ENCODE measurements at regions of chr11 and their contacts with region 1.

Region 1: DNA sequence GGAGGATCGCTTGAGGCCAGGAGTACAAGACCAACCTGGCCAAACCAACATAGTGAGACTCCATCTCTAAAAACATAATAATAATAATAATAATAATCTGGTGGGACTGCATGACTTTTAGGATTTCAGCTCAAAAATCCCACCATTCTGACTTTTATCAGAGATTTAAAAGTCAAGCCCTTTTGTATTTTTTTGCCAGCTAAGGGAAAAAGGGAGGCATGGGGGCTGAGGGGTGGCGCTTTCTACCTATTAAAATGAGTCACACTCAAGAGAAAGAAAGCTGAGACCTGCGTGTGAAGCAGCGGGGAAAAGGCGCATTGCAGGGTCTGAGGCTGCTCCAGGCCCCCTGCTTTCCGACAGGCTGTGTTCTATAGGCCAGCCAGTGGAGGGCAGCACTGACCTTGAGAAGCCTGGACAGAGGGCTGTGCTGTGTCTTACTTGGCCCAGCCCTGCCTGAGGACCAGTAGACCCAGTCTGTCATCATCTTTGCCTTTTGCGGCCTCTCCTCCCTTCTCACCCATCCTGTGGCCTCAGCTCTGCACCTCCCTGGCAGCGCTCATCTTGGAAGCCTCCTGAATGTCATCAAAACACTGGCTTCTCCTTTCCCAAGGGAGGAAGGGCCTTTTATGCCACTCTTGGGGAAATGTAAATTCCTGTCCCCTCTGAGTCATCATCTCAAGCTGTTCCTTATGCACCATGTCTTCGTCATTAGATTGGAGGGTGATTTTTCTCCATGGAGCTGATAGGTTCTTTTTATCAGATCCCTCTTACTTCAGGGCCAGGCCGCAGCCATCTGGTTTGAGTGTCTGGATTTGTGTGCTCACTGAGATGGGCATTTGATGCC is 12.7 kb upstream of the MAPK8IP1 start:
- DNase-seq: peak; percentile 54 to 70 (median 66)
- ATAC-seq: peak; percentile 78
- H3K4me3 ChIP-seq: no peak overlapping the region
- H3K27ac ChIP-seq: no peak overlapping the region
- H3K4me1 ChIP-seq: no peaks in the 10 kb centered on the region
- H3K27me3 ChIP-seq: no peaks in the 10 kb centered on the region
- CTCF ChIP-seq: peak; percentile 38 to 68 (median 56)
- POLR2A ChIP-seq: no peak

Region 2: DNA sequence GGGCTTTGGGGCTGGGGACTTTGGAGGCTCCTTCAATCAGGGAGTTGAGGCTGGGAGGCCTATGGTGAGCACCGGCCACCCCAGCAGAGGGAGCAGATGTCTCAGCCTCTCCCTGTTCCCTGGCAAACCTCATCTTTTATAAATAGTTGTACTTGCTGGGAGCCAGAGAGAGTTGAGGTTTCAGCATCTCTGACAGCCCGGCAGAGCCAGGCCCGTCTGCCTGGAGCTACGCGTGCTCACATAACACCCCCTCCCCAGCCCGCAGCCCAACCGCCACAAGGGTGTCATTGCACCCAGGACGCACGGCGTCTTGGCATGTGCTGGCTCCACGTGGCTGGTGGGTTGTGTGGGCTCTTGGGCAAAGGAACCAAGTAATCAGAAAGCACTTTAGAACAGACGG is 334.4 kb before region 1 on chr11:
- intact Hi-C with region 1: no loop called
- DNase-seq: no peak
- ATAC-seq: no peak
- H3K4me3 ChIP-seq: no peak overlapping the region
- H3K27ac ChIP-seq: no peak overlapping the region
- H3K4me1 ChIP-seq: no peaks in the 10 kb centered on the region
- H3K27me3 ChIP-seq: no peaks in the 10 kb centered on the region
- CTCF ChIP-seq: no peak
- POLR2A ChIP-seq: no peak

Region 3: GRCh38 chr11:45933131-45933831 is 60.5 kb after region 1 on chr11:
- intact Hi-C with region 1: no loop called
- DNase-seq: peak; percentile 37 to 74 (median 70)
- ATAC-seq: peak; percentile 36
- H3K4me3 ChIP-seq: no peak overlapping the region
- H3K27ac ChIP-seq: peak overlapping the region in 2 of 4 donors; percentile 45 to 52
- H3K4me1 ChIP-seq: peaks cover 30% of the 10 kb centered on the region
- H3K27me3 ChIP-seq: no peaks in the 10 kb centered on the region
- CTCF ChIP-seq: no peak
- POLR2A ChIP-seq: no peak

Region 4: GRCh38 chr11:46006418-46007070 is 133.8 kb after region 1 on chr11:
- intact Hi-C with region 1: loop called (anchors 10 kb)
- DNase-seq: peak in 3 of 4 donors; percentile 21 to 70 (median 35)
- ATAC-seq: peak; percentile 83
- H3K4me3 ChIP-seq: no peak overlapping the region
- H3K27ac ChIP-seq: no peak overlapping the region
- H3K4me1 ChIP-seq: no peaks in the 10 kb centered on the region
- H3K27me3 ChIP-seq: no peaks in the 10 kb centered on the region
- CTCF ChIP-seq: peak; percentile 58 to 81 (median 68)
- POLR2A ChIP-seq: no peak